Vagina (tissue), 2 donors: ENCODE measurements at regions of chr13 and their contacts with region 1.

Region 1: DNA sequence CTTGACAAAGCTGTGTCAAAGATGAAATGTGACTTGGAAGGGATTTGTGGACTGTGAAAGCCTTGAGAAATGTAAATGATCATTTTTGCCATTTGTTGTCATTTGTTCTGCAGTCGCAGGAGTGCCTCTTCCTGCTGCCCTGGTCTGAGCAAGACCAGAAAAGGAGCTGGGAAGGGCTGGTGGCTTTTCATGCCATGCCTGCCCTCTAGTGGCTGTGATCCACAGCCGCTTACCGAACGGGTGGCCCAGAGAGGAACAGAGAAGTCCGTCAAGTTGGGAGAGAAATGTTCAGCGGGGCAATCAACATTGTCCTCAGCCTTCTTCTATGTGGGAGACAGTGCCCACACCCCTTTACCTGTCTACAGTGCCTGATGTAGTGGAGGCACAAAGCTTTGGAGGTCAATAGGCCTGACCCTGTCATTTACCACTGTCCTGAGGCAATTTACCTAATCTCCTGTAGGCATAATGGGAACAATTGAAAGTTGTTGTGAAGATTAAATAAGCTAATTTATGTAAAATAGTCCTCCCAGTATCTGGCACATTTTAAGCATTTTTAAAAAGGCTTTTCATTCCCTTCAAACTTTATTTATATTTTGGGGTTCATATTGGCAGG is 224.4 kb downstream of the B3GLCT start:
- DNase-seq: no peak
- H3K4me3 ChIP-seq: no peak overlapping the region
- H3K27ac ChIP-seq: no peak overlapping the region
- H3K4me1 ChIP-seq: no peaks in the 10 kb centered on the region
- H3K27me3 ChIP-seq: no peaks in the 10 kb centered on the region
- CTCF ChIP-seq: peak; percentile 18 to 74 (median 64)
- POLR2A ChIP-seq: no peak

Region 2: GRCh38 chr13:31236211-31236786 is 187.9 kb before region 1 on chr13:
- intact Hi-C with region 1: loop called (anchors 10 kb)
- DNase-seq: no peak
- H3K4me3 ChIP-seq: no peak overlapping the region
- H3K27ac ChIP-seq: no peak overlapping the region
- H3K4me1 ChIP-seq: no peaks in the 10 kb centered on the region
- H3K27me3 ChIP-seq: no peaks in the 10 kb centered on the region
- CTCF ChIP-seq: peak in 2 of 3 experiments; percentile 54 to 70
- POLR2A ChIP-seq: no peak